Heart left ventricle (tissue), 16 donors: ENCODE measurements at regions of chr17 and their contacts with region 1.

Region 1: DNA sequence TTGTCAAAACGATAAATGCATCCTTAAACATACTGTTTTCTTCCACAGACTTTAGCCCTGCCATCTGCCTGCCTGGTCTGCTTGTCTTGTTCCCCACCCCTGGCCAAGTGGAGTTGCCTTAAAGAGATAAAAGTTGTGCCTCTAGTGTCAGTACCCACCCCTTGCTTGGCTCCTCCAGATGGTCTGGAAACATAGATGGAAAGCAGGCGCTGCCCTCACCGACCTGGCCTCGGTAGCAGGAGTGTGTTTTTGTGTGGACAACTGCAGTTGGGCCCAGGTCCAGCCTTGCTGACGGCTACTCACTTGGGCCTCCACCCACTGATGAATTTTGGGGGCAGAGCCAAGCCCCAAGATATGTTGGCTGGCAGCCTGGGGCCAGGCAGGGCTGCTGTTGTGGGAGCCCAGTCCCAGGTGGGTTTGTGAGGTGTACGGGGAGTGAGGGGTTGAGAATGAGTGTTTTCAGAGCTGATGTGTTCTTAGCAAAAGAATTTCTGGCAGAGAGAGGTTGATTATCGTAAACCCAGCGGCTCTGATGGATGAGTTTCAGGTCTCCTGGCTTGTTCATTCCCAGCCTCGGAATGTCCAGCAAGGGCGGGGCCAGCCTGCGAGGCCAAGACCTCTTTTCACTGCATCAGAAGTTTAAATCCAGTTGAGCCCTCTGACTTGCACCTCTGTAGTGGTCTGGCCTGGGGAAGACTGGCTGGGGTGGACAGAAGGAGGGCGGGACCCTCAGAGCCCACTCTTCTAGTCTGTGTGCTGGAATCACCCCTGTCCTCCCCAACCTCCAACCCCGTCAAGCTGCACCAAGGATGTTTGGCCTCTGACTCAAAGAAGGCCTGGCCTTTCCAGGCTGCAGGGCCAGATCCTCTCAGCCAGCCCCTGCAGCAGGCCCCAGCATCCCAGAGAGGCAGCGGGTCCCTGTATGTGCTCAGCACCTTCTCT is 179.7 kb downstream of the RAB11FIP4 start:
- DNase-seq: peak; percentile 81 to 92 (median 88)
- ATAC-seq: peak; percentile 83 to 90 (median 87)
- H3K4me3 ChIP-seq: no peak overlapping the region
- H3K27ac ChIP-seq: peak overlapping the region; percentile 20 to 84 (median 68)
- H3K4me1 ChIP-seq: peaks cover 4 to 65% (median 51%) of the 10 kb centered on the region in 12 donors
- H3K27me3 ChIP-seq: no peaks in the 10 kb centered on the region
- CTCF ChIP-seq: no peak
- POLR2A ChIP-seq: no peak

Region 2: GRCh38 chr17:31629696-31630470 is 58.7 kb after region 1 on chr17:
- intact Hi-C with region 1: no loop called
- DNase-seq: no peak
- ATAC-seq: no peak
- H3K4me3 ChIP-seq: no peak overlapping the region
- H3K27ac ChIP-seq: no peak overlapping the region
- H3K4me1 ChIP-seq: no peaks in the 10 kb centered on the region
- H3K27me3 ChIP-seq: no peaks in the 10 kb centered on the region
- CTCF ChIP-seq: no peak
- POLR2A ChIP-seq: no peak

Region 3: DNA sequence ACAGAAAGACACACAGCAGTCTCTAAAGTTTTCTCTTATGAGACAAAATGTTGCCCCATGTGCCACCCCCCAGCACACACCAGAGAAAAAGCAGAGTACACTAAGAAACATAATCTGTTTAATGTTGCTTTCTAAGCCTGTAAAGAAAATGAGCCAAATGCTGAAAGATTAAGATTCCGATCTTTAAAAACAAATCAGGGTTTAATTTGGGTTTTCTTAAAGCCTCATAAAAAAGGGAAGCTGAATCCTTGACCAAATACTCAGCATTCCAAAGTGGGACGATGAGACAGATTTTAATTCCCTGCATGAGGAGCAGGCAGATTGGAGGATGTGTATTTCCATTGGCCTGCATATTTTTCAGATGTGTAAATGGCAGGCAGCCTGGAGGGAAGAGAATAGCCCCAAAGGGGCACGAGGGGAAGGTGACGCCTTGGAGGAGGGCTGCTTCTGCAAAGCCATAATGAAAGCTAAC is 169.4 kb after region 1 on chr17:
- intact Hi-C with region 1: loop called in 1 of 10 experiments (anchors 5 kb)
- DNase-seq: no peak
- ATAC-seq: no peak
- H3K4me3 ChIP-seq: no peak overlapping the region
- H3K27ac ChIP-seq: peak overlapping the region in 5 of 12 donors; percentile 43 to 80 (median 70)
- H3K4me1 ChIP-seq: peaks cover 6 to 63% (median 22%) of the 10 kb centered on the region in 12 donors
- H3K27me3 ChIP-seq: peaks cover 0 to 4% (median 0%) of the 10 kb centered on the region in 9 donors
- CTCF ChIP-seq: no peak
- POLR2A ChIP-seq: no peak